ENCODE measurements at regions of chr7 and their contacts with region 1.

Region 1: GRCh38 chr7:4681886-4682620 is at the start of gene FOXK1:
- DNase-seq: peak; percentile 78 to 87 (median 84)
- ATAC-seq: peak; percentile 89
- H3K4me3 ChIP-seq: peak within 1 kb of the TSS; percentile 84
- H3K4me1 ChIP-seq: peaks cover 12% of the 10 kb centered on the region
- CTCF ChIP-seq: no peak
- total RNA-seq, gene FOXK1: 30.1 to 48.5 (median 33.4) TPM

Region 2: DNA sequence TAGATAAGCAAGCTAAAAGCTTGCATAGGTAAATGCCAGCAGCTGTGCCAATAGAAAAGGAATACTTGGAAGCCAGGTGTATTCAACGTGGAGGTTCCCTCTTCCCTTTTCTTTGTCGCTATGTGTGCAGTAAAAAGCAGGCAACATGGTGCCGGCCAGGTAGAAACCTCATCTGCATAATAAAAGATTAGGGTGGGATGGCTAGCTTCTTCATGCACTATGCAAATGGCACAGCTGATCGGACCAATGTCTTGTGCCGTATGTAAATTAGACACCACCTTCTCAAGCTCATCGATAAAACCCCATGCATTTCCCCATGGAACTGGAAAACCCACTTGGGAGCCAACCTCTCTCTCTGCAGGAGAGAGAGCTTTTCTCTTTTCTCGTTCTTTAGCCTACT is 150.8 kb before region 1 on chr7:
- intact Hi-C with region 1: no loop called
- DNase-seq: no peak
- ATAC-seq: no peak
- H3K4me3 ChIP-seq: no peak overlapping the region
- H3K4me1 ChIP-seq: no peaks in the 10 kb centered on the region
- CTCF ChIP-seq: no peak

Region 3: GRCh38 chr7:4744391-4745264 is 62.6 kb after region 1 on chr7:
- intact Hi-C with region 1: loop called in 1 of 2 experiments (anchors 5 kb)
- DNase-seq: peak; percentile 67 to 100 (median 99)
- ATAC-seq: peak; percentile 86
- H3K4me3 ChIP-seq: no peak overlapping the region
- H3K4me1 ChIP-seq: peaks cover 47% of the 10 kb centered on the region
- CTCF ChIP-seq: no peak

Region 4: DNA sequence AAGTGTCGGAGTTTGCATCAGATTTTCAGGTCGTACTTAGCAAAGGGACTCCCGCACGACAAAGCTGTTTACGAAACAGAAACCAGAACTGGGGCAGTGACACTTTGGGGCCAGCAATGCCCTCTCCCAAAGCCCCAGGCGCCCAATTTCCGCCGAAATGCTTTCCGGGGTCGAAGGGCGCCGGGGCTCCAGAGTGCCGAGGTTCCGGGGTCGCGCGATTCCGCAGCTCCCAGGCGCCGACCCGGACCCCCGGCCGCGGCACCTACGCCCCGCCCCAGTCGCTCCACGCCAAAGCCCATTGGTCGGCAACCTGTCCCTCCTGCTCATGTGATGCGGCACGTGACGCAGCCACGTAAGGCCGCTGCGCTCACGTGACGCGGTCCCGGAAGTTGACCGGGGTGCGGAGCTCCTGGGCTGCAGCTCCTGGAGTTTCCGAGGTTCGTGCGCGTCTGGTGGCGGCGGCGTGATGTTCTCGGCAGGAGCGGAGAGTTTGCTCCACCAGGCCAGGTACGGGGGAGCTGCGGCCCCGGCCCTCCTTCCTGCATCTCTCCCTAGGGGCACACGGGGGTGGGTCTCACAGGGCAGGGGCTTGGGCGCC is 93.3 kb after region 1 on chr7 and contains the start of gene AP5Z1:
- intact Hi-C with region 1: no loop called
- DNase-seq: peak; percentile 96 to 98 (median 97)
- ATAC-seq: peak; percentile 96
- H3K4me3 ChIP-seq: peak within 1 kb of the TSS; percentile 95
- H3K4me1 ChIP-seq: peaks cover 17% of the 10 kb centered on the region
- CTCF ChIP-seq: no peak
- total RNA-seq, gene AP5Z1: 39.5 to 47.4 (median 45.2) TPM

Measured in mucosa of descending colon (tissue), 3 donors.